PC-9 (cell line): ENCODE measurements at regions of chr17 and their contacts with region 1.

Region 1: DNA sequence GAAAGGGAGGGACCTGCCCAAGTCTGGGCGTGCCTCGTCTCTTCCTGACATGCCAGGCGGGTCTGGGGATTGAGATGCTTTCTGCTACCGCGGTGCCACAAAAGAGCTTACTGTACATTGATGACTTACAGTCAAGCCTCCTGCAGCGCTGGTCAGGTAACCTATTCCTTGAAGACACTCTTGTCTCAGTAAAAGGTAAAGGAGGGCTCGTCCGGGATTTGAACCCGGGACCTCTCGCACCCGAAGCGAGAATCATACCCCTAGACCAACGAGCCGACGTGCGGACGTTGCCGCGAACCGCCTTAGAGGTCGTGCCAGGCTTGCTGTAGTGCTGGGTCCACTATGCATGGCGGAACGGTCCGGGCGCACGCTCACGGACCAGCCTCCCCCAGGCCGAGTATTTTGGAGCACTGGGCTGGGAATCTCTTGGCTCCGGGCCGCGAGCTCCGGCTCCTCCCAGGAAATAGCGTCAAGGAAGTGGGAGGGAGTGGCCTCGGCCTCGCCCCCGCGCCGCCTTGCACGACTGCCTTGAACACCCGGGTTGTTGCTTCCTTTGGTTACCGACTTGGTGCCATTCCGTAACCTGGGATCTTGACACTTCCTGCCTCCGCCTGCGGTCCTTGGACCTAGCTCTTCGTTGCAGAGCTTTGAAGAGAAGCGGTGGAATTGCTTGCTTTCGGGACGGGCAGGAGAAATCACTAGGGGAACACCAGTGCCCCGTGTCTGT is 12.4 kb upstream of the AURKB start:
- DNase-seq: peak; percentile 73 to 92
- H3K4me3 ChIP-seq: peak overlapping the region; percentile 80
- H3K27ac ChIP-seq: peak overlapping the region; percentile 87
- H3K4me1 ChIP-seq: peaks cover 11% of the 10 kb centered on the region
- H3K27me3 ChIP-seq: no peaks in the 10 kb centered on the region
- CTCF ChIP-seq: no peak

Region 2: DNA sequence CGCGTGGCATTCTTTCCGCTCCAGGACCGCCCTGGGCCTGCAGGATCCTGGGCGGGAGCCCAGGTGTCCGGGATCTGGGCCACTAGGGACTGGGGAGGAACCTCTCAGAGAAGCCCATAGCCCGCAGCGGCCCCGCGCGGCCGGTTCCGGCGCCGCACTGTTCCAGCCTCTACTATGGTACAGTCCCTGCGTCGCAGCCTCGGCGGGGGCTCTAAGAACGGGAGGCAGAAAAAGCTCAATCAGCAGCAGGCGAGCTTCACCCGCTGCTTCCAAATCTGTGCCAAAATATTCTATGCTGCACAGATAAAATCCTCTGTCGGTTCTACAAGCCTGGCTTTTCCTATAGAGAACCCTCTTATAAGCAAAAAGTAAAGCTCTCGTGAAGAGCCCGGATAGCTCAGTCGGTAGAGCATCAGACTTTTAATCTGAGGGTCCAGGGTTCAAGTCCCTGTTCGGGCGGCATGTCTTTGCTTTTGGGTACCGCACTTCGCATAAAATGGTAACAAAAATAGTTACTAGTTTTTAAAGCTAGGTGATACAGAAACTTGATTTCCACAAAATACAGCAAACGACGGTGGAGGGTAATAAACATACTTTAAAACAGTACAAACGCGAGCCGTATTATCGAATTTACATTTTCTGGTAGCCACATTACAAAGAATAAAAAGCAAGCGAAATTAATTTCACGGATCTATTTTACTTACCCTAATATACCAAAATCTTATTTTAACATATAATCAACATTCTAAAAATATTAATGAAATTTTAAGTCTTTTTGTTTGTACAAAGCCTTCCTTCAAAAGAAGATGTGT is 103.8 kb before region 1 on chr17:
- CTCF ChIA-PET with region 1: interaction called, 3 read pairs
- POLR2A ChIA-PET with region 1: no interaction called
- intact Hi-C with region 1: loop called (anchors 1 kb)
- DNase-seq: peak; percentile 67 to 87
- H3K4me3 ChIP-seq: peak overlapping the region; percentile 87
- H3K27ac ChIP-seq: peak overlapping the region; percentile 87
- H3K4me1 ChIP-seq: peaks cover 11% of the 10 kb centered on the region
- H3K27me3 ChIP-seq: no peaks in the 10 kb centered on the region
- CTCF ChIP-seq: peak; percentile 74

Region 3: GRCh38 chr17:8162233-8162996 is 60.4 kb before region 1 on chr17 and contains the start of gene VAMP2:
- CTCF ChIA-PET with region 1: no interaction called
- POLR2A ChIA-PET with region 1: no interaction called
- intact Hi-C with region 1: no loop called
- DNase-seq: peak in 1 of 2 experiments; percentile 62
- H3K4me3 ChIP-seq: peak within 1 kb of the TSS; percentile 75
- H3K27ac ChIP-seq: no peak within 1 kb of the TSS
- H3K4me1 ChIP-seq: peaks cover 8% of the 10 kb centered on the region; the same call in 1 of the 2 replicates
- H3K27me3 ChIP-seq: no peaks in the 10 kb centered on the region
- CTCF ChIP-seq: no peak
- total RNA-seq, gene VAMP2: 29.3 and 35.1 TPM in 2 replicates

Region 4: GRCh38 chr17:8173056-8173870 is 49.5 kb before region 1 on chr17:
- CTCF ChIA-PET with region 1: no interaction called
- POLR2A ChIA-PET with region 1: interaction called, 8 read pairs
- intact Hi-C with region 1: loop called (anchors 5 kb)
- DNase-seq: peak; percentile 79 to 96
- H3K4me3 ChIP-seq: peak overlapping the region; percentile 63
- H3K27ac ChIP-seq: peak overlapping the region; percentile 93
- H3K4me1 ChIP-seq: 0 out of 2 replicates have a peak, but pooled peaks cover 7% of the 10 kb centered on the region
- H3K27me3 ChIP-seq: no peaks in the 10 kb centered on the region
- CTCF ChIP-seq: no peak

Region 5: DNA sequence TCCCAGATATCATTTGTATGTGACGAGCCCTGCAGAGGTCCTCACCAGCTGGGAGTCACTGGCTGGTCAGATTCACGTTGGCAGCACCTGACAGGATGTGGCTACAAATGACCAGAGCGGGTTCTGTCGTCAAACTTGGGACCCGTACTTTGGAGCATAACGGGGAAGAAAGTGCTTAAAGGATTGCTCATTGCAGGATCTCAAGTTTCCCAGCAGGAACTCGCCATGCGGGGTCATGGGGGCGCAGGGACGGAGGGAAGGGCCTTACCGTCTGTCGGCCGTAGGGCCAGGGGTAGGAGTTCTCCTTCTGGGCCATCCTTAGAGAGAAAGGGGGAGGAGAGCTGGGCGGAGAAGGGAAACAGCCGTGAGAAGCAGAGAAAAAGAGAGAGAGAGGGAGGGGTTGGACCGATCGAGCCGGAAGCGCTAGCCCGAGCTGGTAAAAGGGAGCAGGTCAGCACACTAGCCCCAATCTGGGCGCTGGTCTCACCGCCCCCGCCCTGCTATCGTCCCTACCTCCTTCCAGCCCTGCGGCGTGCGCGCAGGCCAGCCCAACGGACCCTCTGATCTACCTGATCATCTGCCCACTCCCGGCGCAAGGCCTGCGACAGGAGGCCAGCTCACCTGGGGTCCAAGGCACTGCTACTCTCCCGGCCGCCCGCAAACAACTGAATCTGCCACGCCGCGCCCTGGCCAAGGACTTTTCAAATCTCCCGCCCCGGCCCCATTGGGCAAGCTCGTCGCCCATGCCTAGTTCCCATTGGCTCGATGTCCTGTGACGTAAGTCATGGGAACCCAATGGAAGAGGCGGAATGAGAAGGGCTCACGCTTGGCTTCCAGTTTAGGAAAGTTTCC is 12.7 kb before region 1 on chr17 and contains the start of gene AURKB:
- CTCF ChIA-PET with region 1: interaction called, 4 read pairs
- POLR2A ChIA-PET with region 1: interaction called, 15 read pairs
- intact Hi-C with region 1: loop called (anchors 1 kb)
- DNase-seq: peak; percentile 84 to 96
- H3K4me3 ChIP-seq: peak within 1 kb of the TSS; percentile 70
- H3K27ac ChIP-seq: peak within 1 kb of the TSS; percentile 55
- H3K4me1 ChIP-seq: peaks cover 12% of the 10 kb centered on the region
- H3K27me3 ChIP-seq: no peaks in the 10 kb centered on the region
- CTCF ChIP-seq: no peak
- total RNA-seq, gene AURKB: 159 and 167 TPM in 2 replicates

Region 6: DNA sequence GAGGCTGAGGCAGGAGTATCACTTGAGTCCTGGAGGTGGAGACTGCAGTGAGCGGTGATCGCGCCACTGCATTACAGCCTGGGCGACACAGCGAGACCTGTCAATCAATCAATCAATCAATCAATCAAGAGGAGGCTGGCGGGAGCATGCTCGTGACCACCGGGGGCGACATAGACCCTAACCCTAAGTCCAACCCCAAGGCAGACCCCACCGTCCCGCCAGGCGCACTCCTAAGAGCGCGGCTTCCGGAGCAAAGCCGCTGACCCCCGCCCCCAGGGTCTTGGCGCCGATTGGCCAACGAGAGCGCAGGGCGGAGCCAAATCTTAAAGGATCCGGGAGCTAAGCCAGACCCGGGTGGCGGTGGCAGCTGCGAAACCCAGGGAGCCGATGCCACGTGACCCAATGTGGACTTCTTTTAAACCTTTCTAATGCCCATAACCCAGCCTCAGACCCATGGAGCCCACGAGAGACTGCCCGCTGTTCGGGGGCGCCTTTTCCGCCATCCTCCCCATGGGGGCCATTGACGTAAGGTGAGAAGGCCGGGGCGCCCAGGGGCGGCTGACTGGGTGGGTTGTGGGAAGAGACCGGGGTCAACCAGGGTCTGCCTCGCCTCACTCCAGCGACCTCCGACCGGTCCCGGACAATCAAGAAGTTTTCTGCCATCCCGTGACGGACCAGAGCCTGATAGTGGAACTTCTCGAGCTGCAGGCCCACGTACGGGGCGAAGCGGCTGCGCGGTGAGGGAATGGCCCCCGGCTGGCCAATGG is 65.7 kb after region 1 on chr17 and contains the start of gene RANGRF:
- CTCF ChIA-PET with region 1: no interaction called
- POLR2A ChIA-PET with region 1: interaction called, 10 read pairs
- intact Hi-C with region 1: no loop called
- DNase-seq: peak; percentile 49 to 86
- H3K4me3 ChIP-seq: peak within 1 kb of the TSS; percentile 88
- H3K27ac ChIP-seq: no peak within 1 kb of the TSS
- H3K4me1 ChIP-seq: peaks cover 5% of the 10 kb centered on the region; the same call in 1 of the 2 replicates
- H3K27me3 ChIP-seq: no peaks in the 10 kb centered on the region
- CTCF ChIP-seq: no peak
- total RNA-seq, gene RANGRF: 35.0 and 45.5 TPM in 2 replicates

Region 7: DNA sequence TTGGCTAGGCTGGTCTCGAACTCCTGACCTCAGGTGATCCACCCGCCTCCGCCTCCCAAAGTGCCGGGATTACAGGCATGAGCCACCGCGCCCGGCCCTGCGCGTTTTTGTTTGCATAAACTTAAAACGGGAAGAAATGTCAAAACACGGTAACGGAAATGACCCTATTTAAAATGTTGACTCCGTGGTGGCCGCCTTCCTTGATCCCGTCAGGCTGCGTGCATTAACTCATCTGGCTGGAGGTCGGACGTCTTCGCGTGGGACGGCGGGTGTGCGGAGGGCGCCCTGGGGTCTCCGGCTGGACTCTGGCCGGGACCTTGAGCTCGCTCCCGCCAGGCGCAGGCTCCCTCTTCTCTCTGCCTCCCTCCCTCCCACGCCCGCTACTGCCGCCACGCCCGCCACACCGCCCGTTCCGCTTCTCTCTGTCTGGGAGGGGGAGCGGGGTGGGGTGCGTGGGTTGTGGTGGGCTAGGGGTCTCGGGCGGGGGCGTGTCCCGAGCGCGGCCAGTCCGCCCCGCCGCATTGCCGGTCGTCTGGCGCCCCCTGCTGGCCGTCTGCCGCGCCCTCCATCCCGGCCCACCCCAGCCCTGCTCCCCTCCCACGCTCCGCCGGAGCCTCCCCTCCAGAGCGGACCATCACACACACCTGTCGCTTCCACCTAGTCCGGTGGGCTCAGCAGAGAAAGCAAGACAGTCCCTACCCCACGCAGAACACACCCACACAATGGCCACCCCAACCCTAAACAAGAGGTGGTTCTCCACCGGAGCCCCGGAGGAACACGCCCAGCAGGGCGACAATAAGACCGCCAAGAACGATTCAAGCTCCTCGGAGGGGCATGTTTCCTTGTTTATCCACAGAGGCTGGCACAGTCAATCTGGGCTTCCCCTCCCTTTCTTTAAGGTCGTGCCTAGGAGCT is 523.0 kb after region 1 on chr17:
- CTCF ChIA-PET with region 1: no interaction called
- POLR2A ChIA-PET with region 1: no interaction called
- intact Hi-C with region 1: loop called (anchors 10 kb)
- DNase-seq: peak in 1 of 2 experiments; percentile 59
- H3K4me3 ChIP-seq: peak overlapping the region; percentile 31; the same call in 1 of the 2 replicates
- H3K27ac ChIP-seq: no peak overlapping the region
- H3K4me1 ChIP-seq: no peaks in the 10 kb centered on the region
- H3K27me3 ChIP-seq: peaks cover 18% of the 10 kb centered on the region
- CTCF ChIP-seq: peak; percentile 76